Activated CD4-positive, alpha-beta memory T cell treated with anti-CD3 and anti-CD28 coated beads, Interleukin-2, amount 10 ng/mL, durations not matched to agents 7 days and 5 days (primary cell): ENCODE measurements at regions of chr16 and their contacts with region 1.

Region 1: DNA sequence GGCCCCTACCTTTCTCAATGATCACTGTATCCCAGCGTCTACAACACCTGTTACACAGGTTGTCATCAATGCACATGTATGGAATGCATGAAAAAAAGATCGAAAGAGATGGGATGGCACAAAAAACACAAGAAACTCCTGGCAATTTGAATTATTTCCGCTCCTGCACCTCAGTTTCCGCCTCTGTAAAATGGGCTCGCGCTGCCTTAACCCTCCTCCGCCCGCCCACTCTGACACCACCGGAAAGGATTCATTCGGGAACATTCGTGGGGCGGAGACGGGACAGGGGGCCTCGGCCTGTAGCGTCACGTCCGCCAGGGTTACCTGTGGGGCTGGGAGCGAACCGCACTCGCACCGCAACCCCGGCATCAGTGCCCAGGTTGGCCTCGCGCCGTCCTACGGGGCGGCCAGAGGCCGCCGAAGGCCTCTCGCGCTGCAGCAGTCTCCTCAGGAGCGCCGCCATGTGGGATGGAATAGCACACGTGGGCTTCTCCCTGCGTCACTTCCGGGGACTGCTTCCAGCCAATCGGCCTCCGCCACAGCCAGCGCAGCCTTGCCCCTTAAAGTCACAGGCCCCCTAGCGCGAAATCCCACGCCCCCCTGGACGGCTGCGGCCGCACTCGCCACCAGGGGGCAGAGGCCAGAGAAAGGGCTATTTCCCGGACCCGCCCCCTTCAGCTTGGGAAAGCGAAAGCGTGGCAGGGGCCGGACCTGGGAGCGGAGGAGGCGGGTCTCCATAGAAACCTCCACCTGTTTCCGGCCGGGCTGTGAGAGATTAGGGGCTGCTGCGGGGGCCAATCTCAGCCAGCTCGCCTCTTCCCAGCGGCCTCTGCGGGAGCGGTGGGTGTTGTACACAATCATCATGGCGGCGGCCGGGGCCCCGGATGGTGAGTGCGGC is at the starts of genes EARS2 and UBFD1:
- DNase-seq: peak; percentile 97
- H3K4me3 Mint-ChIP-seq: peak within 1 kb of the TSS; percentile 87
- H3K27ac Mint-ChIP-seq: peak within 1 kb of the TSS; percentile 81
- H3K4me1 Mint-ChIP-seq: peaks cover 45% of the 10 kb centered on the region
- H3K27me3 Mint-ChIP-seq: no peaks in the 10 kb centered on the region
- total RNA-seq, gene EARS2: 9.3 to 11.0 TPM
- total RNA-seq, gene UBFD1: 36.6 to 39.7 TPM

Region 2: GRCh38 chr16:23435500-23435899 is 121.6 kb before region 1 on chr16:
- CTCF ChIA-PET with region 1: interaction called, 17 read pairs
- POLR2A ChIA-PET with region 1: no interaction called
- DNase-seq: peak; percentile 72
- H3K4me3 Mint-ChIP-seq: no peak overlapping the region
- H3K27ac Mint-ChIP-seq: no peak overlapping the region
- H3K4me1 Mint-ChIP-seq: peaks cover 3% of the 10 kb centered on the region
- H3K27me3 Mint-ChIP-seq: no peaks in the 10 kb centered on the region

Region 3: DNA sequence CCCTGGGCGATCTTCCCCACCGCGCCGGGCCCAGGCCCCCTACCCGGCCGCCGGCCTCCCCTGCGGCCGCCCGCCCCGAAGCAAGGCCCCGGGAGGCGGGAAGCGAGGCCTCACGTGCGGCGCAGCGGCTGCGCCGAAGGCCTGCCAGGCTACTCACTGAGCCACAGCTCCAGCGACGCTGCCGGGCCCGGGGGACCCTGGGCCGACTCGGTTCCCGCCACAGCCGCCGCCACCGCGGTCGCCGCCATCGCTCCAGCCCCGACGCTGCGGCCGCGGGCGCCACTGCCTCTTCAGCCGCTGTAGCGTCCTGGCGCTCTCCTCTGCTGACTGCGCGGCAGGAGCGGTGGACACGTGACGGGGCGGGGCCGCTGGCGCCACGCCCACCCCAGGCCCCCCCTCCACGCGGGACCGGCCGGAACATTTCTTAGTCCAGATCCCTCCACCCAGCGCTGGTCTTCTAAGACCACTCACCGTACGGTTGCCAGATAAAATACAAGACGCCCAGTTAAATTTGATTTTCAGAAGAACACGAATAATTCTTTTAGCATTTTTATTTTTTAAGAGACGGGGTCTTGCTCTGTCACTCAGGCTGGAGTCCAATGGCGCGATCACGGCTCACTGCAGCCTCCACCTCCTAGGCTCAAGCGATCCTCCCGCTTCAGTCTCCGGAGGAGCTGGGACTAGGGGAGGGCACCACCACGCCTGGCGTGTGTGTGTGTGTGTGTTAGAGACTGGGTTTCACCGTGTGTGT is 46.8 kb before region 1 on chr16 and contains the start of gene GGA2:
- CTCF ChIA-PET with region 1: interaction called, 12 read pairs
- POLR2A ChIA-PET with region 1: interaction called, 23 read pairs
- DNase-seq: peak; percentile 82
- H3K4me3 Mint-ChIP-seq: peak within 1 kb of the TSS; percentile 90
- H3K27ac Mint-ChIP-seq: peak within 1 kb of the TSS; percentile 79
- H3K4me1 Mint-ChIP-seq: peaks cover 59% of the 10 kb centered on the region
- H3K27me3 Mint-ChIP-seq: no peaks in the 10 kb centered on the region
- total RNA-seq, gene GGA2: 95.3 to 97.8 TPM

Region 4: DNA sequence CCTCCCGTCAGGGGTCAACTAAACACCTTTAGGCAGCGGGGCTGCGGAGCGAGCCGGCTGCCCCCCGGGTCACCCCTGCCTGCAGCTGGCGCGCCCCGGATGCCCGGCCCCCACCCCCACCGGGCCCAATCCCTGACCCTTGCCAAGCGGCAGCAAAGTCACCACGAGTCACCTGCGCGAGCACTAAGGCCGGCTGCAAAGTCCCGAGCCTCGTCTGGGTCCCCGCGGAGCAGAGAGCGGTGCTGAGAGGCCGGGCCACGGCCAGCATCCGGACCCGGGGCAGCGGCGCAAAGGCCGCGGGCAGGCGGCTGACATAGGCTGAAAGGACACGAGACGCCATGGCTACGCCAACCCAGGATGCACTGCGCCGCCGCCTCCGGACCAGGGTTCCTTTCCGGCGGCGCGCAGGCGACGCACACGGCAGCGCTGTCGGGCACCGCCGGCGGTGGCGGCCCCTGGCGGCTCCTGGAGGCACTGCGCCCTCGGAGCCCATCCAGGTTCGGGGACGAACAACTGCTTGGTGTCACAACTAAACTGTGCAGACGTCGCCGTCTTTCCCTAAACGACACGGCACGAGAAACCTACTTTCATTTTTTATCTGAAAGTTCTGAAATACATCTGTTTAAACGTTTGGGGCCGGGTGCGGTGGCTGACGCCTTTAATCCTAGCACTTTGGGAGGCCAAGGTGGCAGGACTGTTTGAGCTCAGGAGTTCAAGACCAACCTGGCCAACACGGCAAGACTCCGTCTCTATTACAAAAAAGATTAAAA is 39.0 kb after region 1 on chr16 and contains the start of gene NDUFAB1:
- CTCF ChIA-PET with region 1: interaction called, 12 read pairs
- POLR2A ChIA-PET with region 1: interaction called, 9 read pairs
- DNase-seq: peak; percentile 93
- H3K4me3 Mint-ChIP-seq: peak within 1 kb of the TSS; percentile 80
- H3K27ac Mint-ChIP-seq: peak within 1 kb of the TSS; percentile 68
- H3K4me1 Mint-ChIP-seq: peaks cover 24% of the 10 kb centered on the region
- H3K27me3 Mint-ChIP-seq: no peaks in the 10 kb centered on the region
- total RNA-seq, gene NDUFAB1: 79.8 to 81.1 TPM

Region 5: GRCh38 chr16:23678430-23679273 is 121.5 kb after region 1 on chr16 and contains the start of gene PLK1:
- CTCF ChIA-PET with region 1: interaction called, 10 read pairs
- POLR2A ChIA-PET with region 1: no interaction called
- DNase-seq: peak; percentile 91
- H3K4me3 Mint-ChIP-seq: peak within 1 kb of the TSS; percentile 97
- H3K27ac Mint-ChIP-seq: peak within 1 kb of the TSS; percentile 78
- H3K4me1 Mint-ChIP-seq: peaks cover 45% of the 10 kb centered on the region
- H3K27me3 Mint-ChIP-seq: no peaks in the 10 kb centered on the region
- total RNA-seq, gene PLK1: 102 to 104 TPM

Region 6: GRCh38 chr16:23893986-23894385 is 336.9 kb after region 1 on chr16:
- CTCF ChIA-PET with region 1: no interaction called
- POLR2A ChIA-PET with region 1: no interaction called
- DNase-seq: no peak
- H3K4me3 Mint-ChIP-seq: no peak overlapping the region
- H3K27ac Mint-ChIP-seq: no peak overlapping the region
- H3K4me1 Mint-ChIP-seq: peaks cover 15% of the 10 kb centered on the region
- H3K27me3 Mint-ChIP-seq: no peaks in the 10 kb centered on the region